K562 (cell line): ENCODE measurements at regions of chr18 and their contacts with region 1.

Region 1: GRCh38 chr18:21270453-21270852 is 28.4 kb downstream of the GREB1L start:
- DNase-seq: no peak
- ATAC-seq: no peak
- H3K4me3 ChIP-seq: no peak overlapping the region
- H3K27ac ChIP-seq: no peak overlapping the region
- H3K4me1 ChIP-seq: no peaks in the 10 kb centered on the region
- H3K27me3 ChIP-seq: no peaks in the 10 kb centered on the region
- CTCF ChIP-seq: no peak
- EP300 ChIP-seq: no peak
- POLR2A ChIP-seq: no peak
- RAD21 ChIP-seq: no peak

Region 2: GRCh38 chr18:20996418-20996817 is 274.0 kb before region 1 on chr18:
- CTCF ChIA-PET with region 1: no interaction called
- POLR2A ChIA-PET with region 1: no interaction called
- in situ Hi-C with region 1: no loop called
- intact Hi-C with region 1: no loop called
- DNase-seq: no peak
- ATAC-seq: peak; percentile 33; the same call in 1 of the 3 replicates
- H3K4me3 ChIP-seq: no peak overlapping the region
- H3K27ac ChIP-seq: no peak overlapping the region
- H3K4me1 ChIP-seq: no peaks in the 10 kb centered on the region
- H3K27me3 ChIP-seq: no peaks in the 10 kb centered on the region
- CTCF ChIP-seq: no peak
- EP300 ChIP-seq: no peak
- POLR2A ChIP-seq: no peak
- RAD21 ChIP-seq: no peak

Region 3: DNA sequence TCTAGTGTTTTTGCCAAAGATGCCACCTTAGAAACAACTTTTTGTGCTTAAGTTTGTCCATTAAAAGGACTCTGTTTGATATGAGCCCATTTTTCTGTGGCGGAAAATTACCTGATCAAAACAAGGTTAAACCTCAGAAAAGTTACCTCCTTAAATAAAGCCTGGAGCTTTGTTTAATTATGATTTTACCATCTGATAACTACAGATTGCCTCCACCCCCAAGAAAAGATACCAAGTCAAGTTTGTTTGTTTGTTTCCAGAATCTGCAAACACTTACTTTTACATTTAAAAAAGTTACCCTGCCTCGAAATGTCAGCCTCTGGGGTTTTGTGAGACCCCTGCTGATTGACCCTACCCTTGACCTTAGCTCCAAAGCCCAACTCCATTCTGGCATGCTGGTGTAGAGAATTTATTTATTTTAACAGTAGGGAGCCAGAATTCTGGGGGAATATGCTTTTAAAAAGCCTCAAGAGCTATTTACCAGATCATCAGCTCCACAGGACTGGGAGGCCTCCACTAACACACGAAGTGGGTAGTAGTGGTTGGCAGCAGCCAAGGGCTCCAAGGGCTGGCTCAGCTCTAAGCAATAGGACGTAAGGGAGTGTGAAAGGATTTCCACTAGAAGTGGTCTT is 51.7 kb before region 1 on chr18:
- CTCF ChIA-PET with region 1: no interaction called
- POLR2A ChIA-PET with region 1: no interaction called
- in situ Hi-C with region 1: no loop called
- intact Hi-C with region 1: loop called (anchors 10 kb)
- DNase-seq: no peak
- ATAC-seq: no peak
- H3K4me3 ChIP-seq: no peak overlapping the region
- H3K27ac ChIP-seq: no peak overlapping the region
- H3K4me1 ChIP-seq: no peaks in the 10 kb centered on the region
- H3K27me3 ChIP-seq: peaks cover 0 to 4% of the 10 kb centered on the region in 2 experiments; a peak in 2 of 5 replicates
- CTCF ChIP-seq: no peak
- EP300 ChIP-seq: no peak
- POLR2A ChIP-seq: no peak
- RAD21 ChIP-seq: no peak